Endothelial cell of umbilical vein (primary cell): ENCODE measurements at regions of chr20 and their contacts with region 1.

Region 1: DNA sequence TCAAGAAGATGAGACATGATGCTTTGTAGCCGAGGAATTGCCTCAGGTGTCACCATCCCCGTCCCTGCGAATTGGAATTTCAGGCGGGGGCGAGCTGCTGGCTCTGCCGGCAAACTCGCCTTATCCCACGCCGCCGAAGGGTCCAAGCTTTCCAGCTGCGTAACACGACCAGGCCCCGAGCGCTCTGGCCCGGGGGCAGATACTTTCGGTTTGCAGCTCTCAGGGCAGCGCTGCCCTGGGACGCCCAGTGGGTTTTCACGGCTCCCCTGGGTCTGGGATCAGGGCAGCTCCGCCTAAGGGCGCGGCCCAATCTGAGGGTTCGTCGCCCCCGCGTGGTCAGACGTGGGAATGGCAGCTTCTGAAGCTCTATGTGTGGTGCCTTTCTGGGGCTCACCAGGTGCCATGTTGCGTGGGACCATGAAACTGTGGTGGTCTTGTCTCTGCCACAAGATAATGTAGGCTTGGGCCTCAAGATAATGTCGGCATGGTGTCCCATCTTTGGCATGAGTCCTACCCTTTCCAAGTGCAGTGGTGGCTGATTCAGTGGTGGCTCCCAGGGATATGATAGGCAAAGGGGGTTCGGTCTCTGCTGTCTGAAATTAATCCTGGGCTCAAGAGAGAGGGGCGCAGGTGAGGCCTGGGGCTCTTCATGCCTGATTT is 20.9 kb downstream of the PIGT start:
- DNase-seq: peak; percentile 85
- H3K4me3 ChIP-seq: peak overlapping the region; percentile 42 to 71 (median 52)
- H3K27ac ChIP-seq: no peak overlapping the region
- H3K4me1 ChIP-seq: peaks cover 6% of the 10 kb centered on the region
- H3K27me3 ChIP-seq: no peaks in the 10 kb centered on the region
- CTCF ChIP-seq: peak; percentile 92 to 96
- POLR2A ChIP-seq: no peak

Region 2: GRCh38 chr20:45223136-45223535 is 213.7 kb before region 1 on chr20:
- CTCF ChIA-PET with region 1: no interaction called
- POLR2A ChIA-PET with region 1: no interaction called
- dilution Hi-C with region 1: no loop called
- intact Hi-C with region 1: no loop called
- DNase-seq: no peak
- H3K4me3 ChIP-seq: no peak overlapping the region
- H3K27ac ChIP-seq: no peak overlapping the region
- H3K4me1 ChIP-seq: no peaks in the 10 kb centered on the region
- H3K27me3 ChIP-seq: peaks cover 0 to 3% of the 10 kb centered on the region in 2 experiments
- CTCF ChIP-seq: no peak
- POLR2A ChIP-seq: no peak

Region 3: GRCh38 chr20:45311589-45312211 is 125.2 kb before region 1 on chr20:
- CTCF ChIA-PET with region 1: interaction called, 389 read pairs
- POLR2A ChIA-PET with region 1: no interaction called
- dilution Hi-C with region 1: no loop called
- intact Hi-C with region 1: no loop called
- DNase-seq: peak; percentile 37
- H3K4me3 ChIP-seq: no peak overlapping the region
- H3K27ac ChIP-seq: no peak overlapping the region
- H3K4me1 ChIP-seq: no peaks in the 10 kb centered on the region
- H3K27me3 ChIP-seq: peaks cover 18 to 21% of the 10 kb centered on the region in 2 experiments
- CTCF ChIP-seq: peak; percentile 84 to 97
- POLR2A ChIP-seq: no peak

Region 4: GRCh38 chr20:45347936-45348778 is 88.7 kb before region 1 on chr20 and contains the start of gene SDC4:
- CTCF ChIA-PET with region 1: interaction called, 22 read pairs
- POLR2A ChIA-PET with region 1: no interaction called
- dilution Hi-C with region 1: no loop called
- intact Hi-C with region 1: no loop called
- DNase-seq: peak; percentile 44
- H3K4me3 ChIP-seq: peak within 1 kb of the TSS; percentile 50 to 85 (median 69)
- H3K27ac ChIP-seq: peak within 1 kb of the TSS; percentile 62
- H3K4me1 ChIP-seq: peaks cover 49% of the 10 kb centered on the region
- H3K27me3 ChIP-seq: no peaks in the 10 kb centered on the region
- CTCF ChIP-seq: no peak
- POLR2A ChIP-seq: peak; percentile 99
- total RNA-seq, gene SDC4: 28.7 and 32.0 TPM in 2 replicates

Region 5: DNA sequence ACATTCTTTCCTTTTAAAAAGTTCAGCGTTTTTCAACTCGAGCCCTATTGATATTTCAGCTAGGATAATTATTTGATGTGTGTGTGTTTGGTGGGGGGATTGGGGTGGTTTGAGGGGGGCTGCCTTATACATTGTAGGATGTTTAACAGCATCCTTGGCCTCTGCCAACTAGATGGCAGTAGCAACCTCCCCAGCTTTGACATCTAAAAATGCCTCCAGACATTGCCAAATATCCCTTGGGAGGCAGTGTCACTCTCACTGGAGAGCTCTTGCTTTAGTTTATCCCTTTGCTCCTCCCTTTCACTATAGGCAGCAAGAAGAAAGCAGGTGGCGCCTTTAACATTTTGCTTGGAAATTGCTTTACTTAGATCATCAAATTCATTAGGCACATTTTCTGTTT is 44.1 kb before region 1 on chr20:
- CTCF ChIA-PET with region 1: interaction called, 11 read pairs
- POLR2A ChIA-PET with region 1: no interaction called
- dilution Hi-C with region 1: no loop called
- intact Hi-C with region 1: no loop called
- DNase-seq: no peak
- H3K4me3 ChIP-seq: no peak overlapping the region
- H3K27ac ChIP-seq: no peak overlapping the region
- H3K4me1 ChIP-seq: peaks cover 3% of the 10 kb centered on the region
- H3K27me3 ChIP-seq: no peaks in the 10 kb centered on the region
- CTCF ChIP-seq: no peak
- POLR2A ChIP-seq: no peak

Region 6: DNA sequence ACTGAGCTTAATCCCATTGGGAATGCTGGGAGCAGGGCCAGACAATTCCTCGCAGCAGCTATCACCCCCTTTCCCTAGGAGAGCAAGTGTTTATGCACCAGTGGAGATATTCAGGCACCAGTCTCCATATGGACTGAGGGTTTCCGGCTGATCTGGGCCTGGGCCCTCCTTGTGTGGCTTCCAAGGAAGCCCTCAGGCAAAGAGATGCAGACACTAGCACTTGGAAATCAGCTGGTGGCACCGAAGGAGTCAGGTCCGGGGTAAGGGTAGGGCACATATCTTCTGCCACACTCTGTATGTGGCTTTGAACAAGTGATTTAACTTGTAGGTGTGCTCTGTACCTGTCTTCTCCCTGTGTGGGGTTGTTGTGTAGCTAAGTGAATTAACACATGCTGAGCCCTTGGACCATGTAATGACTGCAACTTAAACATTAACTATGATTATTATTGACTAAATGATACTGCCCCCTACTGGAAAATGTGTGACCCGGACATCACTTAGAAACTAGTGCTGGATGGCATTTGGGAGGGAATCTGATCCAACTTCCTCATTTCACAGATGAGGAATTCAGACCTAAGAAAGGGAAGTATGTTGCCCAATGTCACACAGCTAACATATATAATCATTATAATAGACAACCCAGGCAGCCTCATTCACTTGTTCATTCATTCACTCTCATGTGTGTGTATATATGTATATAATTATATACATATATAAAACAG is 13.4 kb after region 1 on chr20:
- CTCF ChIA-PET with region 1: interaction called, 21 read pairs
- POLR2A ChIA-PET with region 1: interaction called, 3 read pairs
- dilution Hi-C with region 1: no loop called
- intact Hi-C with region 1: no loop called
- DNase-seq: peak; percentile 54
- H3K4me3 ChIP-seq: no peak overlapping the region
- H3K27ac ChIP-seq: no peak overlapping the region
- H3K4me1 ChIP-seq: no peaks in the 10 kb centered on the region
- H3K27me3 ChIP-seq: peaks cover 0 to 3% of the 10 kb centered on the region in 2 experiments
- CTCF ChIP-seq: peak; percentile 48 to 56
- POLR2A ChIP-seq: no peak